Testis (tissue), 5 donors: ENCODE measurements at regions of chr15 and their contacts with region 1.

Region 1: GRCh38 chr15:74540761-74541493 is at the start of gene ARID3B:
- DNase-seq: peak; percentile 99
- H3K4me3 ChIP-seq: peak within 1 kb of the TSS; percentile 83 to 93
- H3K27ac ChIP-seq: peak within 1 kb of the TSS; percentile 36 to 80
- H3K4me1 ChIP-seq: peaks cover 25% of the 10 kb centered on the region
- H3K27me3 ChIP-seq: no peaks in the 10 kb centered on the region
- CTCF ChIP-seq: no peak
- POLR2A ChIP-seq: no peak
- total RNA-seq, gene ARID3B: 53.7 to 58.1 TPM

Region 2: DNA sequence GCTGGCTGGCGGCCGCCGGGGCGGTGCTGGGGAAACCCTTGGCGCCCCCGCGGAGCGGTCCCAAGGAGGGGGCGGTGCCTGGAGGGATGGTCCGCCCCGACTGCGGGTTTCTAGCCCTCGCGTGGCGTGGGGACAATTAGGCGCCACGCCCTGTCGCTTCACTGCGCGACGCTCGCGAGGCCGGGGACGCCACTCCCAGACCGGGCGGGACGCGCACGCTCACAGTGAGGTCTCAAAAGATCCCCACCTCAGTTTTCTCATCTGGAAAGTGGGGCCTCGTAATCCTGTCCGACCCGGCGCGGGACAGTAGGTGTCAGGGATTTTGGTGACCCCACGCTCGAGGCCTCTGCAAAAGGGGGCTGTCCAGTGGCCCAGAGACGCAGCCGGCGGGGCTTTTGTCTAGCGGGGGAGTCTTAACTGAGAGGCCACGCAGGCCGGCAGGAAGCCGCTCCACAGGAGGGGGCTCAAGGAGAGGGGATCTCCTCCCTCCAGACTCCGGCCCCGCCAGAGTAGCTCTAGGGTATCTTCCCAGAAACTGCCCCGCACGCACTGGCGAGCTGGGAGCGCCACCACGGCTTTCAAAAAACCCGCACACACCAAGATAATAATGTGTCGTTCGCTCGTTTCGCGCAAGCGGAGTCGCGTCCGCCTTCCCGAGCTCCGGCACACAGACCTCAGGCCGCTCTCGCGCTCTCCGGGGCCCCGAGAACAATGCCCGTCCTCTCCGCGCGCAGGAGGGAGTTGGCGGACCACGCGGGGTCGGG is 74.0 kb after region 1 on chr15:
- intact Hi-C with region 1: loop called (anchors 5 kb)
- DNase-seq: peak; percentile 85
- H3K4me3 ChIP-seq: peak overlapping the region; percentile 99 to 100
- H3K27ac ChIP-seq: peak overlapping the region; percentile 97 to 98
- H3K4me1 ChIP-seq: peaks cover 39% of the 10 kb centered on the region
- H3K27me3 ChIP-seq: no peaks in the 10 kb centered on the region
- CTCF ChIP-seq: no peak
- POLR2A ChIP-seq: no peak